Naive thymus-derived CD4-positive, alpha-beta T cell (primary cell): ENCODE measurements at regions of chr3 and their contacts with region 1.

Region 1: DNA sequence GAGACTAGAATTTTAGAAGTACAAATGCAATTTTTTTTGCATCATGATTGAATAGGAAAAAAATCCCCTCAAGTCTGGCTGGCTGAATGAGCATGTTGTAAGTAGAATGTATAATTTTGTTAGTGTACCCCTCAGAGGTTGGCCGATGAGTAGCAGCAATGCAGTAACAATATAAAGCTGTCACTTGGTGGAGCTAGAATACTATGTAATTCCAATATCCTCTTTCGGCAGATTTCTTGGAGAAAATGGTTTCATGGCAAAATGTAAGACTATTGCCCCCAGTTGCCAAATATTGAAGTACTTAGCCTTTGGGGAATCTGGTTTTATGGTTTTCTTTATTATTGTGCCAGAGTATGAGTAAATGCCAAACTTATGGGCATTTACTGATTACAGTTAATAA is 39.8 kb upstream of the SGO1 start:
- DNase-seq: peak in 1 of 9 donors; percentile 0
- ATAC-seq: no peak
- H3K4me3 ChIP-seq: no peak overlapping the region
- H3K4me3 Mint-ChIP-seq: no peak overlapping the region
- H3K27ac ChIP-seq: no peak overlapping the region
- H3K27ac Mint-ChIP-seq: no peak overlapping the region
- H3K4me1 ChIP-seq: no peaks in the 10 kb centered on the region
- H3K4me1 Mint-ChIP-seq: no peaks in the 10 kb centered on the region
- H3K27me3 ChIP-seq: no peaks in the 10 kb centered on the region
- H3K27me3 Mint-ChIP-seq: peaks cover 0 to 19% (median 0%) of the 10 kb centered on the region in 5 donors

Region 2: DNA sequence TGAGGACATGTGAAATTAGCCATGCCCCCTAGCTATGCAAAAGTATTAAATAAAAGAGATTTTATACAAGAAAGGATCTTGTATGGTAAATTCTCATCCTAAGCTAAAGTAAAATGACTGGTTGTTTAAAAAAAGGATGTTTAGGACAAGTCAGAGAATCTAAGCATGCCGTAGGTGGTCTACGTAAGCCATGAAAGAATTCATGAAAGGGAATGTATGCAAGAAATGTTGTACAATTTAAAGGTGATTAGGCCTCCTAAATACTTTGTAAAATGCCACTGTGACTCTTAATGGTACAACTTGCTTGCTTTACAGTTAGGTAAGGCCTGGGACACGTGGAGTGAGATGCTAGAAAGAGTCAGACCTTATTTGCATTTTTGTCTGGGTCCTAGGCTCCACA is 500.8 kb before region 1 on chr3:
- CTCF ChIA-PET with region 1: no interaction called
- POLR2A ChIA-PET with region 1: no interaction called
- intact Hi-C with region 1: no loop called
- DNase-seq: no peak
- ATAC-seq: no peak
- H3K4me3 ChIP-seq: no peak overlapping the region
- H3K4me3 Mint-ChIP-seq: no peak overlapping the region
- H3K27ac ChIP-seq: no peak overlapping the region
- H3K27ac Mint-ChIP-seq: no peak overlapping the region
- H3K4me1 ChIP-seq: no peaks in the 10 kb centered on the region
- H3K4me1 Mint-ChIP-seq: no peaks in the 10 kb centered on the region
- H3K27me3 ChIP-seq: no peaks in the 10 kb centered on the region
- H3K27me3 Mint-ChIP-seq: peaks cover 0 to 4% (median 0%) of the 10 kb centered on the region in 5 donors

Region 3: DNA sequence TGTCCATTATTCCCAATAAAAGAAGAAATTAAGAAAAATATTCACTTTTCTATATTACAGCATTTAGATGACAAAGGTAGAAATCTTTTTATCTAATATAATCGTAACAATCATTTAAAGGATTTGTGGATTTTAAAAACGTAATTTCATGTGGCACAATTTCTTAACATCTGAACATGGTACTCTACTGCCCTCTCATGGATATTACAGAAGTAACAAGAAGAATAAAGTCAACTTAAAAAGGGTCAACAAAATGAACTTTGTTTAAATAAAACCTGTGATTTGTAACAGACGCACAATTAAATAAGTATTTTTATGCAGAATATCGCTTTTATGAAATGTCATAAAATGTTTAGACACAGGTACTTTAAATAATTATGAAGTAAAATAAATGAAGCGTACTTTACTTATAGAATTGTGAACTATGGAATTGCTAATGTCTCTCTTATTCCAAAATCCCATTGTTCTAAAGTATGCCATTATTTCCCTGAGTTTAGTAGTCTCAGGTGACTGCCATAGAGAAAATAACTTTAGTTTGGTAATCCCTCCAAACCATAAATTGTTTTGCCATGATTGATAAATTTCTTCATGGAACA is 1892.1 kb after region 1 on chr3:
- CTCF ChIA-PET with region 1: no interaction called
- POLR2A ChIA-PET with region 1: no interaction called
- intact Hi-C with region 1: loop called in 1 of 2 experiments (anchors 10 kb)
- DNase-seq: no peak
- ATAC-seq: no peak
- H3K4me3 ChIP-seq: no peak overlapping the region
- H3K4me3 Mint-ChIP-seq: no peak overlapping the region
- H3K27ac ChIP-seq: no peak overlapping the region
- H3K27ac Mint-ChIP-seq: no peak overlapping the region
- H3K4me1 ChIP-seq: no peaks in the 10 kb centered on the region
- H3K4me1 Mint-ChIP-seq: no peaks in the 10 kb centered on the region
- H3K27me3 ChIP-seq: no peaks in the 10 kb centered on the region
- H3K27me3 Mint-ChIP-seq: no peaks in the 10 kb centered on the region